WTC11 (cell line): ENCODE measurements at regions of chr1 and their contacts with region 1.

Region 1: DNA sequence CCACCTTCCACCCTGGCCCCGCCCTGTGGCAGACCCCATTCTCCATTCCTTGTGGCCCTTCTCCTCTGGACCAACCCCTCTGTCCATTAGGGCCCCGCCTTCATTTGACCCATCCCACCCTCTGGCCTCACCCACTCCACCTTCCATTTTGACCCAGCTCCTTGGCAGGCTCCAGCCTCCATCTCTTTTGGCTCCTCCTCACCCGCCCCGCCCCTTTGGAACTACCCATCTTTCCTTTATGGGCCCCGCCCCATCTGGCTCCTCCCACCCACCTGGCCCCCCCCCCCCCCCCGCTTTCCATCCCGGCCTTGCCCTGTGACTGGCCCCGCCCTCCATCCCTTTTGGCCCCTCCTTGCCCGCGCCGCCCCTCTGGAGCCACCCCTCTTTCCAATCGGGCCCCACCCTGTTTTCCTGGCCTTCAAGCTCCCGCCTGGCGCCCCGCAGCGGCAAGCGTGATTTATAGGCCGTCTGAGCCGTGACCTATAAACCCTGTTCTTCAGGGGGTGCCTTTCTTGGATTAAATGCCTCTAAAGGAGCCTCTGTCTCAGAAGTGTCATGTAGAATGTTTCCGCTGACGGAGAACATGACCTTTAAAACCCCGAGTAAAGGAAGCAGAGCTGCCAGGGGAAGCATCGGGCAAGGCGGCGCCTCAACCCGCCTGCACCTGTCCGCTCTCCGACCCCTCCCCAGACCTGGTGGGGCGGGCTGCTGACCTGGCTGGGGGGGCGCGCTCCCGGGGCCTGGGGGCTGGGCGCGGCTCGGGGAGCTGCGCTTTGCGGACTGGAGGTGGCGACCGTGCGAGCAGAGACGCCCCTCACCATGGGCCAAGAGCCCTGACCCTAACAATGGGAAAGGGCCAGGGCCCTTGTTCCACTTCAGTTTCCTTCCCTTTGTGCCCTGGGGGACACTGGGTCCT is 178.0 kb downstream of the CAMTA1 start:
- DNase-seq: peak; percentile 100
- ATAC-seq: peak; percentile 87
- H3K4me3 Mint-ChIP-seq: peak overlapping the region; percentile 72
- H3K27ac Mint-ChIP-seq: 0 out of 2 replicates have a peak overlapping the region, but pooled peaks have one; percentile 76
- H3K4me1 Mint-ChIP-seq: peaks cover 39% of the 10 kb centered on the region
- H3K27me3 Mint-ChIP-seq: peaks cover 3% of the 10 kb centered on the region
- CTCF ChIP-seq: no peak

Region 2: DNA sequence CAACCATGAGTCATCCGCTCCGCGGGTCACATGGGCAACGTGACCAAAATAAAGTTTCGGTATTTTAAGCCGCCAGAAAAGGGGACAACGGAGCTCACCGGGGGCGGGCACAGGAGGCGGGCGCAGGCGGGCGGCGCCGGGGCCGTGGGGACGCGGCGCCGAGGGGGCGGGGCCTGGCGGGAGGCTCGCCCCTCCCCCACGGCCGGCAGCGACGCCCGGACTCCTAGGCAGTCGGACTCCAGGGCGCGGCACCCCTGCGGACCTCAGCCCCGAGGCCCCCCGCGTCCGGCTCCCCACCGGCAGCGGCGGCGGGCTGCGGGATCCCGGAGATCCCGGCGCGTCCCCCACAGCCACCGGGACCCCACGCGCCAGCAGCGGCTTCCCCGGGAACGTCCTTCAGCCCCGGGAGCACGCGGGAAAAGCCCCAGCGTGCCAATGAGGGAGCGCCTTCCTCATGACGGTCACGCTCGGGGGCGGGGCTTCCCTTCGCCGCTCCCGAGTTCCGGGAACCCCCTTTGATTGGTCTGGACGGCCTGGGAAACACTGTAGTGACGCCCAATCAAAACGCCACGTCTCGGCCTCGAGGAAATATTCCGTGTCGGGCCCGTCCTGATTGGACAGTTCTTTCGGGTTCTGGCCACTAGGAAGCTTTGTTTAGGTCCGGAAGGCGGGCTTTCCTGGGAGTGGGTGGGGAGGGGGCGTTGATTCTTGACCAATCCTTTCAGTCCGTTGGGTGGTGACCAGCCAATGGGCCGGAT is 178.5 kb before region 1 on chr1:
- CTCF ChIA-PET with region 1: interaction called, 7 read pairs
- POLR2A ChIA-PET with region 1: interaction called, 10 read pairs
- DNase-seq: peak; percentile 99
- ATAC-seq: peak; percentile 90
- H3K4me3 Mint-ChIP-seq: peak overlapping the region; percentile 83
- H3K27ac Mint-ChIP-seq: no peak overlapping the region
- H3K4me1 Mint-ChIP-seq: peaks cover 40% of the 10 kb centered on the region
- H3K27me3 Mint-ChIP-seq: no peaks in the 10 kb centered on the region
- CTCF ChIP-seq: no peak

Region 3: DNA sequence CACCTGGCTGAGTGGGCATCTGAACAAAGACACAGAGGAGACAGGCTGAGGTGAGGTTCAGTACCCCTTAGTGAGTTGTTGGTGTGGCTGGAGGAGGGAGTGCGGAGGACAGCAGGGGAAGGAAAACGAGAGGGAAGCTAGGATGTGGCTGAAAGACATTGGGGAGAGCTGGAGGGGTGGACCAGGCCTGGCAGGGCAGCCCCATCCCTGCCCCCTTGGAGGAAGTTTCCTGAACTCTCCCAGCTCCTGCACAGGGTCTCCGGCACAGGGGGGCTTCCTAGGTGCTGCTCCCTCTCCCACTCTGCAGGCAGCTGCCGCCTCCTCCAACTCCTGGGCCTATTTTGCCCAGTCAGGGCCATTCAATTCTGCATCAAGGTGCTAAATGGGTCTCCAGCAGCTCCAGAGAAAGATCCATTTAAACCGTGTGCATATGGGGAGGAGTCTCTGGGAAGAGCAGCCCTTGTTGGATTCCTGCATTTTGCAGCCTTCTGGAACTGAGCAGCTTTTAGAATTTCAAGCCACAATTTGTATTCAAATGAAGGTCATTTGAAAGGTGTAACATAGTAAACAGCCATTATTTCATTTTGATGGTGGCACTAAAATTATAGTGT is 15.9 kb after region 1 on chr1:
- CTCF ChIA-PET with region 1: interaction called, 21 read pairs
- POLR2A ChIA-PET with region 1: interaction called, 5 read pairs
- DNase-seq: no peak
- ATAC-seq: peak; percentile 72
- H3K4me3 Mint-ChIP-seq: peak overlapping the region; percentile 2; the same call in 1 of the 2 replicates
- H3K27ac Mint-ChIP-seq: peak overlapping the region; percentile 41
- H3K4me1 Mint-ChIP-seq: peaks cover 40% of the 10 kb centered on the region
- H3K27me3 Mint-ChIP-seq: no peaks in the 10 kb centered on the region
- CTCF ChIP-seq: no peak